ENCODE measurements at regions of chr12 and their contacts with region 1.

Region 1: DNA sequence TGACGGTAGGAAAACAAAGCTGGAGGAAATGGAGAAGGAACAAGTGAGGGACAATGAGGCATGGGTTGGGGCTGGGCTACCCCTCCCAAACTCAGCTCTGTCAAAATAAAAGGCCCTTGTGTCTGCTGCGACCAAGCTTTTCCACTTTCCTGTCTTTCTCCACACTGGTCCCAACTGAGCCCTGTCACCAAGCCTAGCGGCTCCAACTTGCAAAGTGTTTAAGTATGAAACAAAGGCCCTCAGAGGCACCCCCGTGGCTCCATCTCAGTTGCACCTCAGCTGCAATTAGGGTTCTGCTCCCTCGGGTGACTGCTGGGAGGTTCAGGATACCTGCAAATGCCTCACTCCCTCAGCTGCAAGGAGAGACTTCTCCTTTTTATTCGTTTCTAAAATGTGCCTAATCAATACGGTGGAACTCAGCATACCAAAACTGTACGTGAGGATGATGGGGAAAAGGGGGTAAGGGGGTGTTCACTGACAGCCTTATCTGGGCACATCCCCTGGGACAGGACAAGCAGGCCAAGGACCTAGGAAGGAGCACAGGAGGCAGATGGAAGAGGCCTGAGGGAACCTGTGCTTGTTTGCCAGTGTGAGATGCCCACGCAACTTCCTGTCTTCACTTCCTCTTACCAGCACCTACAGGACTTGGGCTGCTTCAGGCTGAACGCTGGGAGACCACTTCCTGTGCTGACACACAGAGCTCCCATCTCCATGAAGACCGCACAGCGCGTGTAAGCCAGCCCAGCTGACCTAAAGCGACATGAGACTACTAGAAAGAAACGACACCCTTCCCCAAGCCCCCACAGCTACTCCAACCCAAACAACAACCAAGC is 8.9 kb downstream of the VAMP1 start:
- DNase-seq: peak; percentile 78
- ATAC-seq: peak; percentile 84
- H3K4me3 Mint-ChIP-seq: peak overlapping the region; percentile 81
- H3K27ac Mint-ChIP-seq: peak overlapping the region; percentile 99
- H3K4me1 Mint-ChIP-seq: peaks cover 74% of the 10 kb centered on the region
- H3K27me3 Mint-ChIP-seq: no peaks in the 10 kb centered on the region

Region 2: GRCh38 chr12:6335451-6336078 is 126.1 kb before region 1 on chr12:
- POLR2A ChIA-PET with region 1: interaction called, 32 read pairs
- DNase-seq: peak; percentile 84
- ATAC-seq: peak; percentile 57
- H3K4me3 Mint-ChIP-seq: no peak overlapping the region
- H3K27ac Mint-ChIP-seq: no peak overlapping the region
- H3K4me1 Mint-ChIP-seq: peaks cover 46% of the 10 kb centered on the region
- H3K27me3 Mint-ChIP-seq: no peaks in the 10 kb centered on the region

Region 3: DNA sequence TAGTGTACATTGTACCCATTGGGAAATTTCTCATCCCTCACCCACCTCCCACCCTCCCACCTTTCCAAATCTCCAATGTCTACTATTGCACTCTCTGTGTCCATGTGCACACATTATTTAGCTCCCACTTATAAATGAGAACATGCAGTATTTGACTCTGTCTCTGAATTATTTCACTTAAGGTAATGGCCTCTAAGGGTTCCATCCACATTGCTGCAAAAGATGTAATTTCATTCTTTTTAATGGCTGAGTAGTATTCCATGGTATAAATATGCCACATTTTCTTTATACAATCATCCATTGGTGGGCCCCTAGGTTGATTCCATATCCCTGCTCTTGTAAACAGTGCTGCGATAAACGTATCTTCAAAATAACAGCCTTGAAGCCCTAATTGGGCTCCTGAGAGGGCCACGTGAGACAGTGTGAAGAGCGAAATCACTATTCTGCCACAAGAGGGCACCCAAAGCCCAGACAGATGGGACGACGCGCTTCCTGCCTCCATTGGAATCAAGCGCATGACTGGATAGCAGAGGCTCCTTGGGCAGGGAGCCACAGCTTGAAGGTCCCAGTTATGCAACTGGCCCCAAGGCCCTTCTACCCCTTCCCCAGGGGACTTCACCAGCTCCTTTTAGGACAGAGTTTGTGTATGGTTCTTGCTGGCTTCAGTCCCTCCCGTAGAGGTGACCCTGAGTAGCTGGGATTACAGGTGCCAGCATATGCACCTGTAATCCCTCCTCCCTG is 38.2 kb before region 1 on chr12:
- POLR2A ChIA-PET with region 1: interaction called, 78 read pairs
- DNase-seq: peak; percentile 69
- ATAC-seq: peak; percentile 81
- H3K4me3 Mint-ChIP-seq: no peak overlapping the region
- H3K27ac Mint-ChIP-seq: peak overlapping the region; percentile 76
- H3K4me1 Mint-ChIP-seq: peaks cover 45% of the 10 kb centered on the region
- H3K27me3 Mint-ChIP-seq: peaks cover 7% of the 10 kb centered on the region

Region 4: GRCh38 chr12:6434205-6435140 is 27.1 kb before region 1 on chr12:
- POLR2A ChIA-PET with region 1: interaction called, 11 read pairs
- DNase-seq: no peak
- ATAC-seq: peak; percentile 95
- H3K4me3 Mint-ChIP-seq: peak overlapping the region; percentile 69
- H3K27ac Mint-ChIP-seq: peak overlapping the region; percentile 90
- H3K4me1 Mint-ChIP-seq: peaks cover 37% of the 10 kb centered on the region
- H3K27me3 Mint-ChIP-seq: no peaks in the 10 kb centered on the region

Region 5: GRCh38 chr12:6451348-6452244 is 10.0 kb before region 1 on chr12 and contains the start of gene TAPBPL:
- POLR2A ChIA-PET with region 1: interaction called, 177 read pairs
- DNase-seq: peak; percentile 73
- ATAC-seq: peak; percentile 83
- H3K4me3 Mint-ChIP-seq: peak within 1 kb of the TSS; percentile 98
- H3K27ac Mint-ChIP-seq: peak within 1 kb of the TSS; percentile 98
- H3K4me1 Mint-ChIP-seq: peaks cover 51% of the 10 kb centered on the region
- H3K27me3 Mint-ChIP-seq: no peaks in the 10 kb centered on the region
- total RNA-seq, gene TAPBPL: 49.4 to 50.1 TPM

Region 6: DNA sequence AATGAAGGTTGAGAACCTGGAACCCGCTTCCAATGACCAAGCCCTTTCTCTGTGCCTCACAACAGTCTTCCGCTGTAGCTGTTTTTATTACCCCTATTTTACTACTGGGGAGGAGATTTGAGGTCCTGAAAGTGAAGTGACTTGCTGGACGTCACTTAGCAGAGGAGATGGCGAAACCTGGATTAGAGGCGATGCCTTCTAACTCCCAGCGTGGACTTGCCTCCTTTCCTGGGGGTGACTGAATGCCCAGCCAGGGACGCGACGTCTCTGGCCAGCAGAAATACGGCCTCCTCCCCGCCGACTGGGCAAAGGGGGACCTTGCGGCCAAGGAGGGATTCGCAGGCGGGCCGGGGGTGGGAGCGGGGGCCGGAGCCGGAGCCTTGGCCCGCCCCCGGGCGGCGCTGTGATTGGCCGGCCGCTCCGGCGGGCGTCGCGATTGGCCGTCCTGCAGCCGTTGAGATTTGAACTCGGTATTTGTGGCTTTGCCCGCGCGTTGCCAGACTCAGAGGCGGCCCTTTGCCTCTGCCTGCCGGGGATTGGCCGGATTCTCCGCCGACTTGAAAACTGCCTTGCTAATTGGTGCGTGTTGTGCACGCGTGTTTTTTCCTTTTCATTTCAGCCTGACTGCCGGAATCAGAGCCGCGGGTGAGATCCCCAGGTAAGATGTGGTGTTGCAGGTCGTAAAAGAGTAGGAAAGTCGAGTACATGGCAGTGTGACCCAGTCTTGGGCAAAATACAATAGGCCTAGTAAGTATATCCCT is 32.1 kb after region 1 on chr12 and contains the start of gene NCAPD2:
- POLR2A ChIA-PET with region 1: interaction called, 25 read pairs
- DNase-seq: peak; percentile 94
- ATAC-seq: peak; percentile 87
- H3K4me3 Mint-ChIP-seq: peak within 1 kb of the TSS; percentile 97
- H3K27ac Mint-ChIP-seq: peak within 1 kb of the TSS; percentile 97
- H3K4me1 Mint-ChIP-seq: peaks cover 28% of the 10 kb centered on the region
- H3K27me3 Mint-ChIP-seq: no peaks in the 10 kb centered on the region
- total RNA-seq, gene NCAPD2: 147 to 157 TPM

Region 7: DNA sequence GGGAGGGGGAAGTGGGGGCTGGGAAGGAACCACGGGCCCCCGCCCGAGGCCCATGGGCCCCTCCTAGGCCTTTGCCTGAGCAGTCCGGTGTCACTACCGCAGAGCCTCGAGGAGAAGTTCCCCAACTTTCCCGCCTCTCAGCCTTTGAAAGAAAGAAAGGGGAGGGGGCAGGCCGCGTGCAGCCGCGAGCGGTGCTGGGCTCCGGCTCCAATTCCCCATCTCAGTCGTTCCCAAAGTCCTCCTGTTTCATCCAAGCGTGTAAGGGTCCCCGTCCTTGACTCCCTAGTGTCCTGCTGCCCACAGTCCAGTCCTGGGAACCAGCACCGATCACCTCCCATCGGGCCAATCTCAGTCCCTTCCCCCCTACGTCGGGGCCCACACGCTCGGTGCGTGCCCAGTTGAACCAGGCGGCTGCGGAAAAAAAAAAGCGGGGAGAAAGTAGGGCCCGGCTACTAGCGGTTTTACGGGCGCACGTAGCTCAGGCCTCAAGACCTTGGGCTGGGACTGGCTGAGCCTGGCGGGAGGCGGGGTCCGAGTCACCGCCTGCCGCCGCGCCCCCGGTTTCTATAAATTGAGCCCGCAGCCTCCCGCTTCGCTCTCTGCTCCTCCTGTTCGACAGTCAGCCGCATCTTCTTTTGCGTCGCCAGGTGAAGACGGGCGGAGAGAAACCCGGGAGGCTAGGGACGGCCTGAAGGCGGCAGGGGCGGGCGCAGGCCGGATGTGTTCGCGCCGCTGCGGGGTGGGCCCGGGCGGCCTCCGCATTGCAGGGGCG is 72.5 kb after region 1 on chr12 and contains the start of gene GAPDH:
- POLR2A ChIA-PET with region 1: interaction called, 42 read pairs
- DNase-seq: peak; percentile 91
- ATAC-seq: peak; percentile 62
- H3K4me3 Mint-ChIP-seq: peak within 1 kb of the TSS; percentile 100
- H3K27ac Mint-ChIP-seq: peak within 1 kb of the TSS; percentile 98
- H3K4me1 Mint-ChIP-seq: peaks cover 37% of the 10 kb centered on the region
- H3K27me3 Mint-ChIP-seq: no peaks in the 10 kb centered on the region
- total RNA-seq, gene GAPDH: 4,618 to 4,824 TPM

Measured in activated naive CD8-positive, alpha-beta T cell treated with anti-CD3 and anti-CD28 coated beads, Interleukin-2, amount 10 ng/mL, durations not matched to agents 7 days and 5 days (primary cell).